Naive thymus-derived CD4-positive, alpha-beta T cell (primary cell): ENCODE measurements at regions of chr16 and their contacts with region 1.

Region 1: GRCh38 chr16:12079412-12079965 is 103.0 kb downstream of the SNX29 start:
- DNase-seq: peak in 5 of 9 donors; percentile 42 to 61 (median 52)
- ATAC-seq: peak; percentile 34
- H3K4me3 ChIP-seq: peak overlapping the region; percentile 24
- H3K4me3 Mint-ChIP-seq: peak overlapping the region; percentile 54 to 94 (median 78)
- H3K27ac ChIP-seq: peak overlapping the region; percentile 84
- H3K27ac Mint-ChIP-seq: peak overlapping the region; percentile 88 to 97 (median 96)
- H3K4me1 ChIP-seq: peaks cover 40 to 66% of the 10 kb centered on the region in 2 donors
- H3K4me1 Mint-ChIP-seq: peaks cover 34 to 93% (median 77%) of the 10 kb centered on the region in 7 donors
- H3K27me3 ChIP-seq: no peaks in the 10 kb centered on the region
- H3K27me3 Mint-ChIP-seq: no peaks in the 10 kb centered on the region

Region 2: GRCh38 chr16:11977376-11978041 is 102.0 kb before region 1 on chr16:
- CTCF ChIA-PET with region 1: no interaction called
- POLR2A ChIA-PET with region 1: interaction called, 4 read pairs
- intact Hi-C with region 1: loop called (anchors 1 to 5 kb)
- DNase-seq: no peak
- ATAC-seq: no peak
- H3K4me3 ChIP-seq: peak overlapping the region; percentile 71
- H3K4me3 Mint-ChIP-seq: peak overlapping the region; percentile 85 to 99 (median 94)
- H3K27ac ChIP-seq: peak overlapping the region; percentile 88
- H3K27ac Mint-ChIP-seq: peak overlapping the region; percentile 60 to 97 (median 93)
- H3K4me1 ChIP-seq: peaks cover 11 to 19% of the 10 kb centered on the region in 2 donors
- H3K4me1 Mint-ChIP-seq: peaks cover 33 to 55% (median 42%) of the 10 kb centered on the region in 7 donors
- H3K27me3 ChIP-seq: no peaks in the 10 kb centered on the region
- H3K27me3 Mint-ChIP-seq: no peaks in the 10 kb centered on the region

Region 3: GRCh38 chr16:12089492-12090150 is 10.1 kb after region 1 on chr16:
- CTCF ChIA-PET with region 1: interaction called, 29 read pairs
- POLR2A ChIA-PET with region 1: interaction called, 33 read pairs
- intact Hi-C with region 1: loop called (anchors 1 kb)
- DNase-seq: peak; percentile 20 to 60 (median 49)
- ATAC-seq: peak; percentile 89
- H3K4me3 ChIP-seq: peak overlapping the region; percentile 71
- H3K4me3 Mint-ChIP-seq: peak overlapping the region; percentile 81 to 98 (median 86)
- H3K27ac ChIP-seq: peak overlapping the region; percentile 76
- H3K27ac Mint-ChIP-seq: peak overlapping the region; percentile 87 to 99 (median 97)
- H3K4me1 ChIP-seq: peaks cover 0 to 30% of the 10 kb centered on the region in 2 donors
- H3K4me1 Mint-ChIP-seq: peaks cover 25 to 63% (median 57%) of the 10 kb centered on the region in 7 donors
- H3K27me3 ChIP-seq: no peaks in the 10 kb centered on the region
- H3K27me3 Mint-ChIP-seq: no peaks in the 10 kb centered on the region

Region 4: DNA sequence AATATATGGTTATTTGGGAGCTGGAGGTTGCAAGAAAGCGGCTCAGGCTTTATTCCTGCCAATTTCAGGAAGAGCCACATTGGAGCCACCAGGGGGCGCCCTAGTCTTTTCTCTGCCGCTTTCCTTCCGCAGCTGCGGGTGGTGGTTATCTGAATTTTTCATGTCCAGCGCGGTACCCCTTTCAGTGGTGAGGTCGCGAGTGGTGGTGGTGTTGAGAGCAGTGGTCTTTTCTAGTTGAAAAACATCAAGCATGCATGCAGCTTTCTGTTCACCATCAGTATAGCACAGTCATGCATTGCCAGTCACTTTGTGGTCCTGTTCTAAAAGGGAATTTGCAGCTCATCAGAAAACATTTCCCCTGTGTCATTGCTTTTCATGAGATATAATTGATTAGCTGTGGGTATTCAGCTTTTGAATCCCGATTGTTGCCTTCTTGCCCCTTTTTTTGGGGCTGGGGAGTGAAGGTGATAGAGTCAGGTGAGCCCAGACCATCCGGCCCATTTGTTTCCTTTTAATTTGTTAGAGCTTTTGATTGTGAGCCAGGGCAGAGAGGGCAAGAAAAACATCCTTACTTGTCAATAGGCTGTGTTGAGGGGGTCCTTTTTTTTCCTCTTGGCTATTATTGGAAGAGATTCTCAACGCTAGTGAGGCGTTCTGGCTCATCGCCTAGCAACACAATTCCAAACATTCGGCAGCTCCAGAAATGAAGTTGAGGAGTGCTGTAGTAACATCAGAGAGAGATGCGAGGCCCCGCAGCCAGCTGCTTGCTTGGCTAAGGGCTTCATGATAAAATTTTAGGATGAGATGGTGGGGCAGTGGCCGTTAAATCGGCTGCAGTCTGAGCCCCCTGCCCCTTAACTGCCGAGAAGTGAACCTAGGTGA is 16.0 kb after region 1 on chr16:
- CTCF ChIA-PET with region 1: interaction called, 29 read pairs
- POLR2A ChIA-PET with region 1: interaction called, 33 read pairs
- intact Hi-C with region 1: loop called in 1 of 2 experiments (anchors 1 kb)
- DNase-seq: peak; percentile 27 to 70 (median 57)
- ATAC-seq: peak; percentile 76
- H3K4me3 ChIP-seq: peak overlapping the region; percentile 31
- H3K4me3 Mint-ChIP-seq: peak overlapping the region; percentile 70 to 86 (median 82)
- H3K27ac ChIP-seq: no peak overlapping the region
- H3K27ac Mint-ChIP-seq: peak overlapping the region in 7 of 9 donors; percentile 25 to 81 (median 63)
- H3K4me1 ChIP-seq: peaks cover 0 to 2% of the 10 kb centered on the region in 2 donors
- H3K4me1 Mint-ChIP-seq: peaks cover 7 to 52% (median 38%) of the 10 kb centered on the region in 7 donors
- H3K27me3 ChIP-seq: no peaks in the 10 kb centered on the region
- H3K27me3 Mint-ChIP-seq: no peaks in the 10 kb centered on the region